Vagina (tissue), 2 donors: ENCODE measurements at regions of chr6 and their contacts with region 1.

Region 1: DNA sequence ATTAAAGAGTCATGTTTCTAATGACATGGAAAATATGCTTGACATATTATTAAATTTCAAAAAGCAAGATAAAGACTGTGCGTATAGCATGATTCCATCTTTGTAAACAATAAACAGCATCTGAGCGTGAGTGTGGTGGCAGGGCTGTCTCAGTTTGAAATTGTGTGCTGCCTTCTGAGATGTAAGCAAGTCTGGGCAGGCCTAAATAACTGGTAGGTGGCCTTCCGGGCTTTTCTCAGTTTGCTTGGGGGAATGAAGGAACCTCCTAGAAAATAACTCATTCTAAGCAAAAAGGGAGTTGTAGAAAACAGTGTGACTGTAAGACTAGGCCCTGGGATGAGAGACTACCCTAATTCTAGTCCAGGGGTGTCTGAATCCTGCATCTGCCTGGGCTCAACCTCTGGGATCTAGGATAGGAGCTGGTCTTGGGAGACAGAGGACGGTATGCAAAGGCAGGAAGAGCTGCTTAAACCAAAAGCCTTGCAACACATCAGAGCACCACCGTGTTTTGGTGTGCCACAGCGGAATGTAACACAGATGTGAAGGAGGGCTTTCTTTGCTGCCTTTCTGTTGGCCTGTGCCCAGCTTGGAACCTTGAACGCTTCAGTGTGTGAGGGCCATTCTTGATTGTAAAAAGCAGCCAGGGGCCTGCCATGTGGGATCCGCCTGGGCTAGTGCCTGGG is 63.5 kb upstream of the L3MBTL3 start:
- DNase-seq: no peak
- H3K4me3 ChIP-seq: no peak overlapping the region
- H3K27ac ChIP-seq: no peak overlapping the region
- H3K4me1 ChIP-seq: no peaks in the 10 kb centered on the region
- H3K27me3 ChIP-seq: no peaks in the 10 kb centered on the region
- CTCF ChIP-seq: no peak
- POLR2A ChIP-seq: no peak

Region 2: DNA sequence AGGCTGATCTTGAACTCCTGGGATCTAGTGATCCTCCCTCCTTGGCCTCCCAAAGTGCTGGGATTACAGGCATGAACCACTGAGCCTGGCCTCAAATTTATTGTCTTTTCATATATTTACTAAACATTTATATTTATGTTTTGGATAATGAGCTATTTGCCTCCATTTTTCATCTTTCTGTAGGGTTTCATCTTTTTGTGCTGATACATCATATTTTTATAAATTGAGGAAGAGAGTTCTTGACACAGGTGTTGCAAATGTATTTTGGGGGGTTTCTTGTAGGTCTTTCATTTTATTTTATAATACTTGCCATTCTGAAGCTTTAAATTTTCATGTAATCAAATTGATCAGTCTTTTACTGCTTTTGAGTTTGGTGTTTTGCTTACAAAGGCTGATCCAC is 135.9 kb after region 1 on chr6:
- intact Hi-C with region 1: no loop called
- DNase-seq: no peak
- H3K4me3 ChIP-seq: no peak overlapping the region
- H3K27ac ChIP-seq: no peak overlapping the region
- H3K4me1 ChIP-seq: no peaks in the 10 kb centered on the region
- H3K27me3 ChIP-seq: no peaks in the 10 kb centered on the region
- CTCF ChIP-seq: no peak
- POLR2A ChIP-seq: no peak

Region 3: GRCh38 chr6:130189531-130190397 is 234.9 kb after region 1 on chr6:
- intact Hi-C with region 1: no loop called
- DNase-seq: no peak
- H3K4me3 ChIP-seq: no peak overlapping the region
- H3K27ac ChIP-seq: no peak overlapping the region
- H3K4me1 ChIP-seq: no peaks in the 10 kb centered on the region
- H3K27me3 ChIP-seq: no peaks in the 10 kb centered on the region
- CTCF ChIP-seq: no peak
- POLR2A ChIP-seq: no peak

Region 4: DNA sequence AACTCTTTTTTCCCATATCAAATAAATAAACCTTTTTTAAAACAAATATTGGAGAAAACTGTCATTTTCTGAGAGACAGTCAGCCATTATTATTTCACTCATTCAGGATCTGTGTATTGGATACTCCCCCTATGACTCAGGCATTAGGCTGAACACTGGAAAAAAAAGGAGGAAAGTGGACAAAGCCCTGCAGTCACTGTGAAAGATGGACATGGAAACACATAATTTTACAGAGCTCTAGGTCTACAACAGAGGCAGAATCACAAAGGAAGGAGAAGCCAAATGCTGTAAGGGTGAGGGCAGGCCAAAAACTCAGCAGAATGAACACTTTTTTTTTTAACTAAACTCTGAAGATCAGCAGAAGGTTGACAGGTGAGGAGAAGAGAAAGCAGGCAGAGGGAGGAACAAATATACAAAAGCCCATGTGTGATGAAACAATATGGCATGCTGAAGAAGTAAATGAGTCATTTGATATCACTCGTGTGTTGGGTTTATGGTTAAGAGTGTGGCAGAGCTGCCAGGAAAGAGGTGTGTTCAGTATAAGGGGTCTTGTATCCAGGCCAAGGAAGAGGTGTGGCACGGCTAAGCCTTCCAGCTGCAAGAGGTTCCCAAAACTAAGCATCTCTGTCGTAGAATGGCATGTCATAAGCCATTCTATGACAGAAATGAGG is 1069.1 kb after region 1 on chr6:
- intact Hi-C with region 1: loop called (anchors 5 kb)
- DNase-seq: no peak
- H3K4me3 ChIP-seq: no peak overlapping the region
- H3K27ac ChIP-seq: no peak overlapping the region
- H3K4me1 ChIP-seq: no peaks in the 10 kb centered on the region
- H3K27me3 ChIP-seq: no peaks in the 10 kb centered on the region
- CTCF ChIP-seq: no peak
- POLR2A ChIP-seq: no peak